Activated CD4-positive, alpha-beta memory T cell treated with anti-CD3 and anti-CD28 coated beads, Interleukin-2, amount 10 ng/mL, durations not matched to agents 7 days and 5 days (primary cell): ENCODE measurements at regions of chr2 and their contacts with region 1.

Region 1: GRCh38 chr2:27428213-27428977 is at the start of gene NRBP1:
- DNase-seq: peak; percentile 93
- H3K4me3 Mint-ChIP-seq: peak within 1 kb of the TSS; percentile 98
- H3K27ac Mint-ChIP-seq: peak within 1 kb of the TSS; percentile 92
- H3K4me1 Mint-ChIP-seq: peaks cover 26% of the 10 kb centered on the region
- H3K27me3 Mint-ChIP-seq: no peaks in the 10 kb centered on the region
- total RNA-seq, gene NRBP1: 103 to 104 TPM

Region 2: GRCh38 chr2:27291865-27292264 is 136.5 kb before region 1 on chr2:
- CTCF ChIA-PET with region 1: no interaction called
- POLR2A ChIA-PET with region 1: no interaction called
- DNase-seq: no peak
- H3K4me3 Mint-ChIP-seq: no peak overlapping the region
- H3K27ac Mint-ChIP-seq: no peak overlapping the region
- H3K4me1 Mint-ChIP-seq: no peaks in the 10 kb centered on the region
- H3K27me3 Mint-ChIP-seq: peaks cover 40% of the 10 kb centered on the region

Region 3: GRCh38 chr2:27370026-27370815 is 58.2 kb before region 1 on chr2 and contains the starts of genes EIF2B4 and SNX17:
- CTCF ChIA-PET with region 1: interaction called, 19 read pairs
- POLR2A ChIA-PET with region 1: interaction called, 63 read pairs
- DNase-seq: peak; percentile 100
- H3K4me3 Mint-ChIP-seq: peak within 1 kb of the TSS; percentile 88
- H3K27ac Mint-ChIP-seq: peak within 1 kb of the TSS; percentile 93
- H3K4me1 Mint-ChIP-seq: peaks cover 45% of the 10 kb centered on the region
- H3K27me3 Mint-ChIP-seq: no peaks in the 10 kb centered on the region
- total RNA-seq, gene EIF2B4: 34.1 to 36.9 TPM
- total RNA-seq, gene SNX17: 116 to 123 TPM

Region 4: GRCh38 chr2:27400348-27401135 is 27.9 kb before region 1 on chr2:
- CTCF ChIA-PET with region 1: interaction called, 5 read pairs
- POLR2A ChIA-PET with region 1: interaction called, 155 read pairs
- DNase-seq: no peak
- H3K4me3 Mint-ChIP-seq: no peak overlapping the region
- H3K27ac Mint-ChIP-seq: peak overlapping the region; percentile 79
- H3K4me1 Mint-ChIP-seq: peaks cover 54% of the 10 kb centered on the region
- H3K27me3 Mint-ChIP-seq: no peaks in the 10 kb centered on the region

Region 5: GRCh38 chr2:27441958-27442919 is 13.8 kb after region 1 on chr2 and contains the start of gene KRTCAP3:
- CTCF ChIA-PET with region 1: interaction called, 3 read pairs
- POLR2A ChIA-PET with region 1: interaction called, 11 read pairs
- DNase-seq: peak; percentile 25
- H3K4me3 Mint-ChIP-seq: no peak within 1 kb of the TSS
- H3K27ac Mint-ChIP-seq: no peak within 1 kb of the TSS
- H3K4me1 Mint-ChIP-seq: peaks cover 9% of the 10 kb centered on the region
- H3K27me3 Mint-ChIP-seq: no peaks in the 10 kb centered on the region
- total RNA-seq, gene KRTCAP3: 7.5 to 10.1 TPM